ENCODE measurements at regions of chr6 and their contacts with region 1.

Region 1: DNA sequence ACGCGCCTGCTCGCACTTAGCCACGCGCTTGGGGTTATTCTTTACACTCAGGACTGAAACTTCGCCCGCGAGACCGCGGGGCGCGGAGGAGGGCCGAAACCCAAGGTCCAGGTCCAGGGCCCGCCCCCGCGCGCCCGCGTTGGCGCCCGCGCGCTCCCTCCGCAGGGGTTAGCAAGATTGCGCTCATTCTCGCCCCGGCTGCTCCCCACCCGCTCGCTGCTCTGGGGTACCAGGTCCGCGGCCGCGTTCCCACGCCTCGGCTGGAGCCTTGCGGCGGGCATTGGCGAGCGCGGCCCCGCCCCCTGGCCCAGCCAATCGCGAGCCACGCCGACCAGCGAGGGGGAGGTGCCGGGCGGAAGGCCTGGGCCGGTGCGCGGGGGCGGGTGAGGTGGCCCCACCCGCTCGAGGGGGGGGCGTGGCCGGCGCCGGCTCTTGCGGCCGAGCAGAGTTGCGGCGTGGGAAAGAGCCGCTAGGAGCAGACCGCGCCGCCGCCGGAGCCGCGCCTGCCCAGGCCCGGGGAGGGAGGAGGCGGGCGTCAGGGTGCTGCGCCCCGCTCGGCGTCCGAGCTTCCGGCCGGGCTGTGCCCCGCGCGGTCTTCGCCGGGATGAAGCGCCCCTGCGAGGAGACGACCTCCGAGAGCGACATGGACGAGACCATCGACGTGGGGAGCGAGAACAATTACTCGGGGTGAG is at the start of gene HEY2:
- DNase-seq: peak; percentile 83
- ATAC-seq: peak; percentile 82
- H3K4me3 Mint-ChIP-seq: peak within 1 kb of the TSS; percentile 79
- H3K27ac Mint-ChIP-seq: no peak within 1 kb of the TSS
- H3K4me1 Mint-ChIP-seq: peaks cover 39% of the 10 kb centered on the region
- H3K27me3 Mint-ChIP-seq: peaks cover 62% of the 10 kb centered on the region
- total RNA-seq, gene HEY2: not detected

Region 2: GRCh38 chr6:125307150-125307838 is 442.0 kb before region 1 on chr6:
- CTCF ChIA-PET with region 1: interaction called, 60 read pairs
- POLR2A ChIA-PET with region 1: no interaction called
- DNase-seq: no peak
- ATAC-seq: no peak
- H3K4me3 Mint-ChIP-seq: no peak overlapping the region
- H3K27ac Mint-ChIP-seq: no peak overlapping the region
- H3K4me1 Mint-ChIP-seq: peaks cover 29% of the 10 kb centered on the region
- H3K27me3 Mint-ChIP-seq: peaks cover 37% of the 10 kb centered on the region

Region 3: GRCh38 chr6:125367036-125367782 is 382.1 kb before region 1 on chr6:
- CTCF ChIA-PET with region 1: no interaction called
- POLR2A ChIA-PET with region 1: no interaction called
- DNase-seq: no peak
- ATAC-seq: no peak
- H3K4me3 Mint-ChIP-seq: no peak overlapping the region
- H3K27ac Mint-ChIP-seq: no peak overlapping the region
- H3K4me1 Mint-ChIP-seq: no peaks in the 10 kb centered on the region
- H3K27me3 Mint-ChIP-seq: peaks cover 46% of the 10 kb centered on the region

Region 4: DNA sequence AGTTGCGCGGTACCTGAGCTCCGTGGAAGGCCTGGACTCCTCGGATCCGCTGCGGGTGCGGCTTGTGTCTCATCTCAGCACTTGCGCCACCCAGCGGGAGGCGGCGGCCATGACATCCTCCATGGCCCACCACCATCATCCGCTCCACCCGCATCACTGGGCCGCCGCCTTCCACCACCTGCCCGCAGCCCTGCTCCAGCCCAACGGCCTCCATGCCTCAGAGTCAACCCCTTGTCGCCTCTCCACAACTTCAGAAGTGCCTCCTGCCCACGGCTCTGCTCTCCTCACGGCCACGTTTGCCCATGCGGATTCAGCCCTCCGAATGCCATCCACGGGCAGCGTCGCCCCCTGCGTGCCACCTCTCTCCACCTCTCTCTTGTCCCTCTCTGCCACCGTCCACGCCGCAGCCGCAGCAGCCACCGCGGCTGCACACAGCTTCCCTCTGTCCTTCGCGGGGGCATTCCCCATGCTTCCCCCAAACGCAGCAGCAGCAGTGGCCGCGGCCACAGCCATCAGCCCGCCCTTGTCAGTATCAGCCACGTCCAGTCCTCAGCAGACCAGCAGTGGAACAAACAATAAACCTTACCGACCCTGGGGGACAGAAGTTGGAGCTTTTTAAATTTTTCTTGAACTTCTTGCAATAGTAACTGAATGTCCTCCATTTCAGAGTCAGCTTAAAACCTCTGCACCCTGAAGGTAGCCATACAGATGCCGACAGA is 10.0 kb after region 1 on chr6:
- CTCF ChIA-PET with region 1: interaction called, 12 read pairs
- POLR2A ChIA-PET with region 1: no interaction called
- DNase-seq: no peak
- ATAC-seq: no peak
- H3K4me3 Mint-ChIP-seq: no peak overlapping the region
- H3K27ac Mint-ChIP-seq: no peak overlapping the region
- H3K4me1 Mint-ChIP-seq: no peaks in the 10 kb centered on the region
- H3K27me3 Mint-ChIP-seq: peaks cover 49% of the 10 kb centered on the region

Region 5: GRCh38 chr6:126396131-126396530 is 646.8 kb after region 1 on chr6:
- CTCF ChIA-PET with region 1: no interaction called
- POLR2A ChIA-PET with region 1: no interaction called
- DNase-seq: no peak
- ATAC-seq: no peak
- H3K4me3 Mint-ChIP-seq: no peak overlapping the region
- H3K27ac Mint-ChIP-seq: no peak overlapping the region
- H3K4me1 Mint-ChIP-seq: no peaks in the 10 kb centered on the region
- H3K27me3 Mint-ChIP-seq: no peaks in the 10 kb centered on the region

Measured in activated CD8-positive, alpha-beta T cell treated with anti-CD3 and anti-CD28 coated beads, Interleukin-2, amount 10 ng/mL, durations not matched to agents 7 days and 5 days (primary cell).